ENCODE measurements at regions of chr18 and their contacts with region 1.

Region 1: DNA sequence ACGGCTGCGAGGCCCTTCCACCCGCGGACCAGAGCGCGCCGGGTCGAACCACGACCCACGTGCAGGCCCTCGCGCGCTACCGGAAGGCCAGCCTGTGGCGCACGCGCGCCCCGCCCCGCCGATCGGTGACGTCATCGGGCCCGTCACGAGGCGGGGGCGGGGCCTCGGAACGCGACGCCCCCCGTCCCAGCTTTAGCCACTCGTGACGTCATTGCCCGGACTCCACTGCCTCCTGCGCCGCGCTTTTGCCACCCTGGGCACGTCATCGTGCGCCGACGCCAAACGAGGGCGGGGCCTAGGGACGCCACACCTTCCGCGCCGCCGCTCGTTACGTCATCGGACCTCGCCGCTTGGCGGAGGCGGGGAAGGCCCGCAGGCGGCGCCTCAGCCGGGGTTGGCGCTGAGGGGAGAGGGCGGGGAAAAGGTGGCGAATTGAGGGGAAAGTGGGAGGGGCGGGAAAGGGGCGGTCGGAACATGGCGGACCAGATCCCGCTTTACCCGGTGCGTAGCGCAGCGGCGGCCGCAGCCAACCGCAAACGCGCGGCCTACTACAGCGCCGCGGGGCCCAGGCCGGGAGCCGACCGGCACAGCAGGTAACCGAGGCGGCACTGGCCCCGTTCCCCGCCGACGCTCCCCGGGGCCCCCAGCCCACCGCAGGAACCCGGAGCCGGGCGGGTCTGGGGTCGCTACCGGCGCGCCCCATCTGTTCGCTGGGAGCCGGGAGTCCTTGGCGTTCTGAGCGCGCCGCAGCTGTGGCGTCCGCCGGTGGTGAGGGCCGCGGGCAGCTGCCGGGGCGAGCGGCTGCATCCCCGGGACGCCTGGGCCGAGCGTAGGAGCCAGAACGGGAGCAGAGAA is at the start of gene ATP9B:
- DNase-seq: peak; percentile 97 to 99 (median 97)
- H3K4me3 ChIP-seq: peak within 1 kb of the TSS; percentile 30 to 88 (median 78)
- H3K27ac ChIP-seq: peak within 1 kb of the TSS; percentile 76 to 98 (median 92)
- H3K4me1 ChIP-seq: peaks cover 12 to 22% of the 10 kb centered on the region in 2 donors
- H3K27me3 ChIP-seq: no peaks in the 10 kb centered on the region
- CTCF ChIP-seq: peak in 4 of 6 experiments; percentile 10 to 52 (median 24)
- POLR2A ChIP-seq: peak; percentile 66 to 83
- total RNA-seq, gene ATP9B: 20.1 to 36.0 (median 29.3) TPM

Region 2: DNA sequence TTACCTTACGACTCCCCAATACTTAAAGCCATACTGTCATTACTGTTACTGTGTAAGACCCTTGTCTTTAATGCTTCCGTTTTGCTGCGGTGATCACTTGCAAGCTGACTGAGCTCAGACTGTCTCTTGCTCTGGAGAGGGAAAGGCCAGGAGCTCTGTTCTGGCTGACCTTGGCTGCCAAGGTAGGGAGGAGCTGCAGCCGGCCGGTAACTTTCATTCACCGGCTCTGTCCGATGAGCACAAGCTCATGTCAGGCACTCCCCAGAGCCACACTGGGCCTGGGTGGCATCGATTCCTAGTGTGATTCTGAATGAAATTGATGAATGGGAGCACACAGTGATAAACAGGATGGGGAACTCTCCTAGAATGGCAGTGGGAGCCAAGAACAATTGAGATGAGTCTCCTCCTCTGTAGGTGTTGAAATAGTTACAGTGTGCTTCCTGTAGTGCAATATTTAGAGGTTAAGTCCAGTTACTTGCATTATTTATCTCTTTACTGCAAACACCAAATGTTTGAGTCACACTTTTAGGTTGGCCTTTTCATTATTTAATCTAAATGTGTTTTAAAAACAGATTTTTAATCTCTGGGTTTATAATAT is 100.9 kb after region 1 on chr18:
- intact Hi-C with region 1: loop called in 1 of 2 experiments (anchors 10 kb)
- DNase-seq: peak; percentile 30 to 66 (median 56)
- H3K4me3 ChIP-seq: no peak overlapping the region
- H3K27ac ChIP-seq: peak overlapping the region in 2 of 5 donors; percentile 3 to 56
- H3K4me1 ChIP-seq: peaks cover 4 to 6% of the 10 kb centered on the region in 2 donors
- H3K27me3 ChIP-seq: no peaks in the 10 kb centered on the region
- CTCF ChIP-seq: no peak
- POLR2A ChIP-seq: no peak

Measured in adrenal gland (tissue), 19 donors.